Vagina (tissue), 2 donors: ENCODE measurements at regions of chr1 and their contacts with region 1.

Region 1: DNA sequence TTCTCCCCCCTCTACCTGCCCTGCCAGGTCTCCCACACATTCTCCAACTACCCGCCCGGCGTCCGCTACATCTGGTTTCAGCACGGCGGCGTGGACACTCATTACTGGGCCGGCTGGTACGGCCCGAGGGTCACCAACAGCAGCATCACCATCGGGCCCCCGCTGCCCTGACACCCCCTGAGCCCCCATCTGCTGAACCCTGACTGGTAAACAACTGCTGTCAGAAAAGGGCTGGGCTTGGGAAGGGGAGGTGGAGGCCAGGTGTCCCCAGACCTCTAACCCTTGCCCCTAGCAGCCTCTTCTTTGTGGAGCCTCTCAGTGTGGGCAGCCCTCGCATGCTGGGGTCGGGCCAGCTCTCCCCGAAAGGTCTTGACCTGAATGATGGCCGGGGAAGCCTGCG is 2.9 kb upstream of the FBXO6 start:
- DNase-seq: no peak
- H3K4me3 ChIP-seq: no peak overlapping the region
- H3K27ac ChIP-seq: no peak overlapping the region
- H3K4me1 ChIP-seq: peaks cover under 1% of the 10 kb centered on the region
- H3K27me3 ChIP-seq: no peaks in the 10 kb centered on the region
- CTCF ChIP-seq: no peak
- POLR2A ChIP-seq: no peak

Region 2: GRCh38 chr1:11681071-11681771 is 20.1 kb after region 1 on chr1 and contains the start of gene MAD2L2:
- intact Hi-C with region 1: loop called (anchors 1 kb)
- DNase-seq: no peak
- H3K4me3 ChIP-seq: peak within 1 kb of the TSS; percentile 85 to 96
- H3K27ac ChIP-seq: peak within 1 kb of the TSS; percentile 82
- H3K4me1 ChIP-seq: peaks cover 29% of the 10 kb centered on the region
- H3K27me3 ChIP-seq: no peaks in the 10 kb centered on the region
- CTCF ChIP-seq: no peak
- POLR2A ChIP-seq: peak; percentile 34 to 61
- total RNA-seq, gene MAD2L2: 30.0 TPM

Region 3: DNA sequence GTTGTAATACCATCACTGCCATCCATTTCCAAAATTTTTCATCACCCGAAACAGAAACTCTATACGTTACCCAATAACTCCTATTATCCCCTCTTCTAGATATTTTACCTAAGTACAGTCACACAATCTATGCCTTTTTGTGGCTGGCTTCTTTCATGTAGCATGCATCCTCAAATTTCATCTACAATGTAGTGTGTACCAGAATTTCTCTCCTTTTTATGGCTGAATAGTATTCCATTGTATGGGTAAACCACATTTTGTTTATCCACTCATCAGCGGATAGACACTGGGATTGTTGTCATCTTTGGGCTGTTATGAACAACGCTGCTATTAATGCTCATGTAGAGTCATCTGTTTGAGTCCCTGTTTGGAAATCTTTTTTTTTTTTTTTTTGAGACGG is 243.9 kb after region 1 on chr1:
- intact Hi-C with region 1: loop called (anchors 5 kb)
- DNase-seq: no peak
- H3K4me3 ChIP-seq: no peak overlapping the region
- H3K27ac ChIP-seq: no peak overlapping the region
- H3K4me1 ChIP-seq: no peaks in the 10 kb centered on the region
- H3K27me3 ChIP-seq: no peaks in the 10 kb centered on the region
- CTCF ChIP-seq: no peak
- POLR2A ChIP-seq: no peak